GM18951 (cell line): ENCODE measurements at regions of chr3 and their contacts with region 1.

Region 1: DNA sequence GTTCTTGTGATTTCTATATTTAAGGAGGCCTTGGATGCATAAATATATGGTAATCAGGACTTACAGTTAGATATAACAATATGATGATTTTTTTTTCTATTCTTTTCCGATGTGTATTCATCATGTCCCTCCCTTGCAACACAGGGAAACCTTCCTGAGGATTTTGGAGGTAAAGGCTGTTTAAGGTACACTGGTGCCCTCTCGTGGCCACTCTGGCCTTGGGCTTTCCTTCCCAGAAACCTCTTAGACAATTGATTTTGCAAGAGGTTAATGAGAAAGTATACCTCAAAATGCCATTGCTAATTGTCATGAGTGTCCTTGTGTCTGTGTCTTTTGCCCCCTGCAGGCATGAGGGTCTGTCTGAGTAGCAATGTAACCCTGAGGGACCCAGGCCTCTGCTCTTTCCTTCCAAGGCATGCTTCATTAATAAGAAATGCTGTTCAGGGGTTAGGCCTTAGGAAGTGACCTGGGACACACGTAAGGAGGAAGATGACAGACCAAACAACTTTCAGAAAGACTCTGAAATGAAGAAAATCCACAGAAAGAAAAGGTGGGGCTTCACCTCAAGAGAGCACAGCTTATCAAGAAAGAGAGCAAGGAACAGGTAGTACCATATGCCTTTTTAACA is 70.3 kb upstream of the PPP2R3A start:
- POLR2A ChIP-seq: no peak

Region 2: GRCh38 chr3:134600685-134601463 is 1294.3 kb before region 1 on chr3:
- in situ Hi-C with region 1: loop called (anchors 25 kb)
- POLR2A ChIP-seq: no peak

Region 3: GRCh38 chr3:135539351-135539750 is 355.9 kb before region 1 on chr3:
- in situ Hi-C with region 1: no loop called
- POLR2A ChIP-seq: no peak

Region 4: GRCh38 chr3:135752846-135753245 is 142.4 kb before region 1 on chr3:
- in situ Hi-C with region 1: no loop called
- POLR2A ChIP-seq: no peak